Left ventricle myocardium inferior (tissue), 1 donor: ENCODE measurements at regions of chr18 and their contacts with region 1.

Region 1: GRCh38 chr18:6203791-6204190 is 210.9 kb downstream of the L3MBTL4 start:
- DNase-seq: no peak
- H3K4me3 ChIP-seq: no peak overlapping the region
- H3K27ac ChIP-seq: no peak overlapping the region
- H3K4me1 ChIP-seq: no peaks in the 10 kb centered on the region
- H3K27me3 ChIP-seq: no peaks in the 10 kb centered on the region
- CTCF ChIP-seq: no peak

Region 2: DNA sequence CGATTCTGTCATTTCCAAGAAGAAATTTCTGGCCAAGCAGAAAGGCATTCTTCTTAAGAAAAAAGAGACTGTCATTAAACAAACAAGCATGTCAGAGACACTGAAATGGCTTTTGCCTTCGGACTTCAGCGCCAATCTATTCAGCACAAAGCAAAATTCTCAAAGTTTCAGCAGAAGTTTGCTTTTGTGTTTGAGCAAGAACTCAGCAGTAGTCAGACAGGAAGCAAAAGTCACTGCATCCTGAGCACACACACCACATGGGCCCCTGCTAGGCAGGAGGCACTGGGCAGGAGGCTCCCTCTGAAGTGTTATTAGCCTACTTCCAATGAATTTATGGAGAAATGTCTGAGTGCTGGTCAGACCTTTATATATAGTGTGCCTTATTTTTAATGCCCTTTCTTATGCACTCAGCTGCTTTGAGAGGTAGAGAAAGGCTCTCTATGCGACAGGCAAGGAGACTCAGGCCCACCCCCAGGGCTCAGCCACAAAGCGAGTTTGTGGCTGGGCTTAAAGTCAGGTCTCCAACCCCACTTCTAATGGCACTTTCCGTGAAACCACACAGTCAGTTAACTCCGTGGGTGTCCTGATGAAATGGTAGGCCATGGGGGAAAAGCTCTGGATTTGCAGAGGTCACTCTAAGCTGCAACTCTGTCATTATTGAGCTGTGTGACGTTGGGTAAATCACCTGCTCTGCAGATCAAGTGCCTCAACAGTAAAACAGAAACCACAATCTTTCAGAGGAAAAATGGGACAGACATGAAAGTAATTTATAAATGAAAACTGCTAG is 147.5 kb before region 1 on chr18:
- intact Hi-C with region 1: loop called (anchors 10 kb)
- DNase-seq: no peak
- H3K4me3 ChIP-seq: no peak overlapping the region
- H3K27ac ChIP-seq: peak overlapping the region; percentile 41
- H3K4me1 ChIP-seq: peaks cover 53% of the 10 kb centered on the region
- H3K27me3 ChIP-seq: no peaks in the 10 kb centered on the region
- CTCF ChIP-seq: no peak

Region 3: GRCh38 chr18:6096730-6097129 is 107.1 kb before region 1 on chr18:
- intact Hi-C with region 1: no loop called
- DNase-seq: no peak
- H3K4me3 ChIP-seq: no peak overlapping the region
- H3K27ac ChIP-seq: no peak overlapping the region
- H3K4me1 ChIP-seq: no peaks in the 10 kb centered on the region
- H3K27me3 ChIP-seq: no peaks in the 10 kb centered on the region
- CTCF ChIP-seq: no peak